ENCODE measurements at regions of chr7 and their contacts with region 1.

Region 1: GRCh38 chr7:28626624-28627262 is 214.4 kb downstream of the CREB5 start:
- DNase-seq: no peak
- ATAC-seq: no peak
- H3K4me3 ChIP-seq: no peak overlapping the region
- H3K27ac ChIP-seq: peak overlapping the region; percentile 39 to 77 (median 70)
- H3K4me1 ChIP-seq: peaks cover 60 to 74% of the 10 kb centered on the region in 2 donors
- H3K27me3 ChIP-seq: no peaks in the 10 kb centered on the region
- CTCF ChIP-seq: peak; percentile 46 to 74 (median 61)
- POLR2A ChIP-seq: no peak

Region 2: GRCh38 chr7:28179120-28180030 is 447.4 kb before region 1 on chr7:
- in situ Hi-C with region 1: no loop called
- intact Hi-C with region 1: loop called (anchors 10 kb)
- DNase-seq: peak; percentile 55 to 59
- ATAC-seq: peak; percentile 77 to 84
- H3K4me3 ChIP-seq: peak overlapping the region; percentile 53 to 97 (median 68)
- H3K27ac ChIP-seq: peak overlapping the region; percentile 66 to 87 (median 84)
- H3K4me1 ChIP-seq: peaks cover 18 to 21% of the 10 kb centered on the region in 2 donors
- H3K27me3 ChIP-seq: no peaks in the 10 kb centered on the region
- CTCF ChIP-seq: no peak
- POLR2A ChIP-seq: peak; percentile 27 to 41

Region 3: GRCh38 chr7:28408960-28409715 is 217.6 kb before region 1 on chr7:
- in situ Hi-C with region 1: no loop called
- intact Hi-C with region 1: loop called (anchors 2 kb)
- DNase-seq: peak; percentile 94 to 98
- ATAC-seq: peak; percentile 72 to 80
- H3K4me3 ChIP-seq: peak overlapping the region; percentile 61 to 92 (median 72)
- H3K27ac ChIP-seq: peak overlapping the region; percentile 91 to 98 (median 94)
- H3K4me1 ChIP-seq: peaks cover 9 to 21% of the 10 kb centered on the region in 2 donors
- H3K27me3 ChIP-seq: no peaks in the 10 kb centered on the region
- CTCF ChIP-seq: no peak
- POLR2A ChIP-seq: peak; percentile 90 to 91

Region 4: DNA sequence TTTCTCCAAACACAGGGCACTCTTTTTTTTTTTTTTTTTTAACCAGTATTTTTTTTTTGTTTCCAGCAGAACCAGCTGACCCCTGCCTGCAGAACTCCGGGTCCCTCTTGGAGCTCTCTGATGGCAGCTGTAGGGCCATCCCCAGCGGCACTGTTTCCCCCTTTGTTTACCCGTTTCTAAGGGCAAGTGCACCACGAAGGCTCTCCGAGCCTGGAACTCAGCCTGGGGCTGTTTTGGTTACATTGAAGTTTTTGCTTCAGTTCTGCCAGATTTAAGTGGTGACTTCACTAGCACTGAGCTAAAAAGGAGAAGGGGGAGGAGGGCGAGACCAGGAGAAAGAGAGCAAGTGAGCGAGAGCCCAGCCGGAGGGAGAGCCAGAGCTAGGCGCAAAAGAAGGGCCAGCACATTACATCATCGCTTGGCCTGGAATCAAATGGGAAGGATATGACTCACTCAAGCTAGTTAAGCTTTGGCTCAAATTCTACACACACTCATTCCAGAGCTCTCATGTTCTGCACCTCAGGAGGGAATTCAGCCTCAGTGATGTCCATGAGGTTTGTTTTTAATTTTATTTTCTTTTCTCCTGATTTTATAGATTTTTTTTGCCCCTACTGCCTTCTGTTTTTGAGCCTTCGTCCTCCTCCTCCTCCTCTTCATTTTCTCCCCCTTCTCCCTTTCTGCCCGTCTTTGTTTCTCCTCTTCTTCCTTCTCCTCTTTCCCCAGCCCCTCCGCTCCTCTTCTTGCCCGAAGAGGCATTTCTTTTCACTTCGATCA is 59.1 kb after region 1 on chr7:
- in situ Hi-C with region 1: no loop called
- intact Hi-C with region 1: loop called (anchors 2 kb)
- DNase-seq: peak; percentile 93 to 94
- ATAC-seq: peak; percentile 97
- H3K4me3 ChIP-seq: peak overlapping the region; percentile 49 to 68 (median 56)
- H3K27ac ChIP-seq: peak overlapping the region; percentile 76 to 87 (median 80)
- H3K4me1 ChIP-seq: peaks cover 33 to 43% of the 10 kb centered on the region in 2 donors
- H3K27me3 ChIP-seq: no peaks in the 10 kb centered on the region
- CTCF ChIP-seq: no peak
- POLR2A ChIP-seq: peak; percentile 65 to 80

Region 5: GRCh38 chr7:28700790-28701203 is 74.1 kb after region 1 on chr7:
- in situ Hi-C with region 1: no loop called
- intact Hi-C with region 1: no loop called
- DNase-seq: no peak
- ATAC-seq: peak in 1 of 2 donors; percentile 59
- H3K4me3 ChIP-seq: peak overlapping the region in 1 of 4 donors; percentile 8
- H3K27ac ChIP-seq: peak overlapping the region; percentile 28 to 54 (median 40)
- H3K4me1 ChIP-seq: peaks cover 44 to 53% of the 10 kb centered on the region in 2 donors
- H3K27me3 ChIP-seq: no peaks in the 10 kb centered on the region
- CTCF ChIP-seq: no peak
- POLR2A ChIP-seq: no peak

Region 6: GRCh38 chr7:28732071-28732869 is 105.5 kb after region 1 on chr7:
- in situ Hi-C with region 1: no loop called
- intact Hi-C with region 1: no loop called
- DNase-seq: no peak
- ATAC-seq: peak; percentile 13 to 53
- H3K4me3 ChIP-seq: peak overlapping the region in 2 of 4 donors; percentile 17 to 36
- H3K27ac ChIP-seq: peak overlapping the region; percentile 8 to 57 (median 52)
- H3K4me1 ChIP-seq: peaks cover 14 to 25% of the 10 kb centered on the region in 2 donors
- H3K27me3 ChIP-seq: no peaks in the 10 kb centered on the region
- CTCF ChIP-seq: no peak
- POLR2A ChIP-seq: no peak

Region 7: GRCh38 chr7:28853834-28854749 is 227.3 kb after region 1 on chr7:
- in situ Hi-C with region 1: loop called in 2 of 4 experiments (anchors 5 to 25 kb)
- intact Hi-C with region 1: no loop called
- DNase-seq: peak; percentile 39 to 72
- ATAC-seq: peak; percentile 96 to 98
- H3K4me3 ChIP-seq: peak overlapping the region; percentile 54 to 76 (median 64)
- H3K27ac ChIP-seq: peak overlapping the region in 1 of 4 donors; percentile 38
- H3K4me1 ChIP-seq: peaks cover 0 to 7% of the 10 kb centered on the region in 2 donors
- H3K27me3 ChIP-seq: peaks cover 0 to 5% (median 0%) of the 10 kb centered on the region in 3 donors
- CTCF ChIP-seq: peak; percentile 84 to 94 (median 90)
- POLR2A ChIP-seq: no peak

Measured in gastrocnemius medialis (tissue), 4 donors.